Naive thymus-derived CD4-positive, alpha-beta T cell (primary cell): ENCODE measurements at regions of chr14 and their contacts with region 1.

Region 1: DNA sequence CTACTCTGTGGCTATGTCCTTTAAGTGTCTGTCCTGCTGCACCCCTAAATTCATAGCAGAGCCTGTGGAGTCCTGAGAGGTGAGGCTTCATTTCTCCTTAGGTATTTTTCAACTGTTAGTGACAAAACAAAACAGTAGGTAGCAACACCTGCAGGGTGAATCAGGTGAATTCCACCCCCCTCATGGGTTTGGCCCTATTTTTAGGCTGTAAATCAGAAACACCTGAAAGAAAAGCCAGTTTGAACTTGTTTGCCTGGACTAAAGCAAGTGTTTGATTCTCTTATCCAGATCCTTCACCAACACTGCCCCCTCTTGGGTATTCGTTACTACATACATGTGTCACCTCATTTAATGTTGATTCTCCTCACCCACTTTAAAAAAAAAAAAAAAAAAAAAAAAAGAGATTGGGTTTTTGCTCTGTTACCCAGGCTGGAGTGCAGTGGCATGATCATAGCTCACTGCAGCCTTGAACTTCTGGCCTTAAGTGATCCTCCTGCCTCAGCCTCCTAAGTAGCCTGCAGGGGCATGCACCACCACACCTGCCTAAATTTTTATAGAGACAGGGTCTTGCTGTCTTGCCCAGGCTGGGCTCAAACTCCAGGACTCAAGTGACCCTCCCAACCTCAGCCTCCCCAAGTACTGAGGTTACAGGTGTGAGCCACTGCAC is 10.3 kb downstream of the TBPL2 start:
- DNase-seq: peak in 7 of 9 donors; percentile 65 to 83 (median 77)
- ATAC-seq: peak; percentile 94
- H3K4me3 ChIP-seq: no peak overlapping the region
- H3K4me3 Mint-ChIP-seq: no peak overlapping the region
- H3K27ac ChIP-seq: peak overlapping the region; percentile 10
- H3K27ac Mint-ChIP-seq: peak overlapping the region in 8 of 9 donors; percentile 2 to 93 (median 70)
- H3K4me1 ChIP-seq: peaks cover 15 to 32% of the 10 kb centered on the region in 2 donors
- H3K4me1 Mint-ChIP-seq: peaks cover 18 to 48% (median 39%) of the 10 kb centered on the region in 7 donors
- H3K27me3 ChIP-seq: no peaks in the 10 kb centered on the region
- H3K27me3 Mint-ChIP-seq: no peaks in the 10 kb centered on the region

Region 2: GRCh38 chr14:55094321-55095157 is 335.6 kb before region 1 on chr14:
- CTCF ChIA-PET with region 1: interaction called, 3 read pairs
- POLR2A ChIA-PET with region 1: no interaction called
- intact Hi-C with region 1: loop called in 1 of 2 experiments (anchors 1 kb)
- DNase-seq: no peak
- ATAC-seq: no peak
- H3K4me3 ChIP-seq: no peak overlapping the region
- H3K4me3 Mint-ChIP-seq: no peak overlapping the region
- H3K27ac ChIP-seq: no peak overlapping the region
- H3K27ac Mint-ChIP-seq: no peak overlapping the region
- H3K4me1 ChIP-seq: peaks cover 0 to 14% of the 10 kb centered on the region in 2 donors
- H3K4me1 Mint-ChIP-seq: peaks cover 12 to 43% (median 16%) of the 10 kb centered on the region in 7 donors
- H3K27me3 ChIP-seq: no peaks in the 10 kb centered on the region
- H3K27me3 Mint-ChIP-seq: peaks cover 0 to 4% (median 0%) of the 10 kb centered on the region in 5 donors

Region 3: GRCh38 chr14:55212634-55213033 is 217.5 kb before region 1 on chr14:
- CTCF ChIA-PET with region 1: interaction called, 6 read pairs
- POLR2A ChIA-PET with region 1: interaction called, 4 read pairs
- intact Hi-C with region 1: loop called (anchors 1 kb)
- DNase-seq: no peak
- ATAC-seq: no peak
- H3K4me3 ChIP-seq: no peak overlapping the region
- H3K4me3 Mint-ChIP-seq: no peak overlapping the region
- H3K27ac ChIP-seq: no peak overlapping the region
- H3K27ac Mint-ChIP-seq: no peak overlapping the region
- H3K4me1 ChIP-seq: no peaks in the 10 kb centered on the region
- H3K4me1 Mint-ChIP-seq: peaks cover 0 to 5% (median 5%) of the 10 kb centered on the region in 7 donors
- H3K27me3 ChIP-seq: no peaks in the 10 kb centered on the region
- H3K27me3 Mint-ChIP-seq: peaks cover 0 to 11% (median 0%) of the 10 kb centered on the region in 5 donors

Region 4: GRCh38 chr14:55354500-55354899 is 75.7 kb before region 1 on chr14:
- CTCF ChIA-PET with region 1: interaction called, 17 read pairs
- POLR2A ChIA-PET with region 1: no interaction called
- intact Hi-C with region 1: loop called (anchors 1 to 2 kb)
- DNase-seq: peak; percentile 25 to 79 (median 73)
- ATAC-seq: peak; percentile 95
- H3K4me3 ChIP-seq: peak overlapping the region; percentile 12
- H3K4me3 Mint-ChIP-seq: peak overlapping the region in 9 of 10 donors; percentile 48 to 85 (median 72)
- H3K27ac ChIP-seq: peak overlapping the region; percentile 66
- H3K27ac Mint-ChIP-seq: peak overlapping the region; percentile 72 to 96 (median 95)
- H3K4me1 ChIP-seq: peaks cover 0 to 9% of the 10 kb centered on the region in 2 donors
- H3K4me1 Mint-ChIP-seq: peaks cover 6 to 29% (median 21%) of the 10 kb centered on the region in 7 donors
- H3K27me3 ChIP-seq: no peaks in the 10 kb centered on the region
- H3K27me3 Mint-ChIP-seq: no peaks in the 10 kb centered on the region

Region 5: GRCh38 chr14:55398679-55399078 is 31.5 kb before region 1 on chr14:
- CTCF ChIA-PET with region 1: no interaction called
- POLR2A ChIA-PET with region 1: no interaction called
- intact Hi-C with region 1: no loop called
- DNase-seq: no peak
- ATAC-seq: no peak
- H3K4me3 ChIP-seq: no peak overlapping the region
- H3K4me3 Mint-ChIP-seq: no peak overlapping the region
- H3K27ac ChIP-seq: no peak overlapping the region
- H3K27ac Mint-ChIP-seq: no peak overlapping the region
- H3K4me1 ChIP-seq: no peaks in the 10 kb centered on the region
- H3K4me1 Mint-ChIP-seq: peaks cover 7 to 37% (median 32%) of the 10 kb centered on the region in 7 donors
- H3K27me3 ChIP-seq: no peaks in the 10 kb centered on the region
- H3K27me3 Mint-ChIP-seq: no peaks in the 10 kb centered on the region

Region 6: GRCh38 chr14:55411426-55412389 is 18.4 kb before region 1 on chr14 and contains the start of gene ATG14:
- CTCF ChIA-PET with region 1: interaction called, 9 read pairs
- POLR2A ChIA-PET with region 1: interaction called, 3 read pairs
- intact Hi-C with region 1: loop called in 1 of 2 experiments (anchors 1 kb)
- DNase-seq: peak; percentile 48 to 78 (median 66)
- ATAC-seq: peak; percentile 98
- H3K4me3 ChIP-seq: peak within 1 kb of the TSS; percentile 68
- H3K4me3 Mint-ChIP-seq: peak within 1 kb of the TSS; percentile 68 to 94 (median 92)
- H3K27ac ChIP-seq: peak within 1 kb of the TSS; percentile 86
- H3K27ac Mint-ChIP-seq: peak within 1 kb of the TSS; percentile 86 to 95 (median 90)
- H3K4me1 ChIP-seq: peaks cover 11 to 16% of the 10 kb centered on the region in 2 donors
- H3K4me1 Mint-ChIP-seq: peaks cover 26 to 56% (median 39%) of the 10 kb centered on the region in 7 donors
- H3K27me3 ChIP-seq: no peaks in the 10 kb centered on the region
- H3K27me3 Mint-ChIP-seq: peaks cover 0 to 5% (median 0%) of the 10 kb centered on the region in 5 donors
- total RNA-seq, gene ATG14: 7.8 to 19.6 (median 18.8) TPM

Region 7: DNA sequence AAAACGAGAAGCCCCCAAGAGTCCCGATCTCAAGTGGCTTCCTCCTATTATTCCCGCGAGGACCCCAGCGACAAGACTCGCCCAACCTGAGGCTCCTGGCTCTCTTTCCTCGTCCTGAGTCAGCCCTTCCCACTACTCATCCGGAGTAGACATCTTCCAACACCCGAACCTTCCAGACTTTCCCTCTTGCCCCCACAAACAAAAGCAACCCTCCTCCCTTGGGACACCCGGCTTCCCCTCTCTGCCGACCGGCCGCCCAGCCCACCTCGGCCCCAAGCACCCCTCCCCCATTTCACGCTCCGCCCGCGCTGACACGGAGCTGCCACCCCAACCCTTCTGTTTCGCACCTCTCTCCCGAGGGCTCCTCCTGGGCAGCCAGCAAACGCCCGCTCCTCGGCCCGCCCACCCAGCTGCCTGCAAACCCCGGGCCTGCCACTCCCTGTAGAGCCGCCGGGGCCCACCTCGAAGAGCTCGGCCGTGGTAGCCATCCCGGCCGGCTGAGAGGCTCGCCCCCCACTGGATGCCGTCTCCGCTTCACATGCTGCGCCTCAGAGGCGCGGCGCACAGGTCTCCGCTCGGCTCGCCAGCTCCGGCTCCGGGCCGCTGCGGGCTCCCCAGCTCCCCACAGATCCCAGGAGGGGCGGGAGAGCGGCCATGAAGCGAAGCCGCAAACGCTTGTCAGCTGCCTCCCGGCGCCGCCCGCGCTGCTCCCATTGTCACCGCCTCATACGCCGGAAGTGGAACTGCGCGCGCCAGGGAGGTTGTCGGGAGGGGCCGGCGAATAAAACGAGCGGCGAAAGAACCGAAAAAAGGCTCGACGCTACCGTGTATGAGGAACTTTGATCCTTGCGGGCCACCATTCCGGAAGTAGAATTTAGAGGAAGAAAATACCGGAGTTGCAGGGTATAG is 1838.3 kb after region 1 on chr14 and contains the starts of genes AP5M1 and EXOC5:
- CTCF ChIA-PET with region 1: interaction called, 3 read pairs
- POLR2A ChIA-PET with region 1: no interaction called
- intact Hi-C with region 1: loop called in 1 of 2 experiments (anchors 5 kb)
- DNase-seq: peak; percentile 78 to 95 (median 93)
- ATAC-seq: peak; percentile 89
- H3K4me3 ChIP-seq: peak within 1 kb of the TSS; percentile 89
- H3K4me3 Mint-ChIP-seq: peak within 1 kb of the TSS; percentile 97 to 100 (median 99)
- H3K27ac ChIP-seq: peak within 1 kb of the TSS; percentile 91
- H3K27ac Mint-ChIP-seq: peak within 1 kb of the TSS; percentile 98 to 100 (median 99)
- H3K4me1 ChIP-seq: peaks cover 29 to 34% of the 10 kb centered on the region in 2 donors
- H3K4me1 Mint-ChIP-seq: peaks cover 41 to 93% (median 76%) of the 10 kb centered on the region in 7 donors
- H3K27me3 ChIP-seq: no peaks in the 10 kb centered on the region
- H3K27me3 Mint-ChIP-seq: no peaks in the 10 kb centered on the region
- total RNA-seq, gene AP5M1: 42.3 to 62.8 (median 52.1) TPM
- total RNA-seq, gene EXOC5: 27.3 to 71.6 (median 42.2) TPM